ENCODE measurements at regions of chr2 and their contacts with region 1.

Region 1: DNA sequence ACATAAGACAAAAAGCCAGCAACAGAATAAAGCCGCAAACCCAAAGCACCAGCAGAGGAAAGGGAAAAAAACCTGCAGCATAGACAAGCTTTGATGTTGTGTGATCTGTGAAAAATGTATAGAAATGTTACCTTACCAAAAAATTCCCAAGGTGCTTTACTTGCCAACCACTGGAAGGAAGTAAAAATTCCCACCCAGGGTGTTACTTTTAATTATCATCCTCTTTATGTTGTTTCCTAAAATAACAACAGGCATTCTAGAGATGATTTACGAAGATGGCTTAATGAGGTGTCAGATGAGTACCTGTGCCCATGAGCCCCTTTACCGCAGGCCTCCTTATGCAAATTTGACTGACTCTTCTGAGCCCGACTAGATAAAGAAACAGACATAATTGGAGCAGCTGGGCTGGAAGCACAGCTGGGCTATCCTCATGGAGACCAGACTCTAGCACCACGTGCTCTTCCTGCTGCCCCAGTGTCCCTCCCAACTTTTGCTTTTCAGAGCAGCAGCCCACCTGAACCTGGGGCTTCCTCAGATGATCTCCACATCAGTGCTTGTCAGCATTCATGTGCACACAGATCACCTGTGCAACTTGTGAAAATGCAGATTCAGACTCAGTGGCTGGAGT is 41.5 kb downstream of the SRSF7 start:
- DNase-seq: peak in 5 of 14 experiments; percentile 53 to 88 (median 78)
- ATAC-seq: peak; percentile 77
- H3K4me3 ChIP-seq: peak overlapping the region; percentile 2
- H3K4me3 Mint-ChIP-seq: peak overlapping the region; percentile 82
- H3K27ac ChIP-seq: peak overlapping the region; percentile 50 to 55
- H3K27ac Mint-ChIP-seq: peak overlapping the region; percentile 93
- H3K4me1 ChIP-seq: peaks cover 67% of the 10 kb centered on the region
- H3K4me1 Mint-ChIP-seq: peaks cover 72% of the 10 kb centered on the region
- H3K27me3 ChIP-seq: no peaks in the 10 kb centered on the region
- H3K27me3 Mint-ChIP-seq: no peaks in the 10 kb centered on the region
- CTCF ChIP-seq: no peak

Region 2: GRCh38 chr2:38515160-38516074 is 194.3 kb before region 1 on chr2:
- CTCF ChIA-PET with region 1: no interaction called
- POLR2A ChIA-PET with region 1: no interaction called
- intact Hi-C with region 1: no loop called
- DNase-seq: no peak
- ATAC-seq: no peak
- H3K4me3 ChIP-seq: no peak overlapping the region
- H3K4me3 Mint-ChIP-seq: no peak overlapping the region
- H3K27ac ChIP-seq: no peak overlapping the region
- H3K27ac Mint-ChIP-seq: no peak overlapping the region
- H3K4me1 ChIP-seq: no peaks in the 10 kb centered on the region
- H3K4me1 Mint-ChIP-seq: no peaks in the 10 kb centered on the region
- H3K27me3 ChIP-seq: no peaks in the 10 kb centered on the region
- H3K27me3 Mint-ChIP-seq: no peaks in the 10 kb centered on the region
- CTCF ChIP-seq: no peak

Region 3: GRCh38 chr2:38682008-38682575 is 27.6 kb before region 1 on chr2:
- CTCF ChIA-PET with region 1: interaction called, 5 read pairs
- POLR2A ChIA-PET with region 1: interaction called, 13 read pairs
- intact Hi-C with region 1: loop called in 1 of 2 experiments (anchors 2 kb)
- DNase-seq: peak in 4 of 14 experiments; percentile 28 to 82 (median 76)
- ATAC-seq: peak; percentile 88
- H3K4me3 ChIP-seq: peak overlapping the region; percentile 31
- H3K4me3 Mint-ChIP-seq: peak overlapping the region; percentile 49
- H3K27ac ChIP-seq: peak overlapping the region; percentile 71 to 78
- H3K27ac Mint-ChIP-seq: peak overlapping the region; percentile 86
- H3K4me1 ChIP-seq: peaks cover 55% of the 10 kb centered on the region
- H3K4me1 Mint-ChIP-seq: peaks cover 50% of the 10 kb centered on the region
- H3K27me3 ChIP-seq: no peaks in the 10 kb centered on the region
- H3K27me3 Mint-ChIP-seq: no peaks in the 10 kb centered on the region
- CTCF ChIP-seq: peak; percentile 23

Region 4: GRCh38 chr2:38697125-38697840 is 12.4 kb before region 1 on chr2:
- CTCF ChIA-PET with region 1: no interaction called
- POLR2A ChIA-PET with region 1: interaction called, 20 read pairs
- intact Hi-C with region 1: no loop called
- DNase-seq: peak in 12 of 14 experiments; percentile 12 to 86 (median 50)
- ATAC-seq: peak; percentile 65
- H3K4me3 ChIP-seq: no peak overlapping the region
- H3K4me3 Mint-ChIP-seq: peak overlapping the region; percentile 54
- H3K27ac ChIP-seq: peak overlapping the region; percentile 47 to 63
- H3K27ac Mint-ChIP-seq: peak overlapping the region; percentile 90
- H3K4me1 ChIP-seq: peaks cover 79% of the 10 kb centered on the region
- H3K4me1 Mint-ChIP-seq: peaks cover 70% of the 10 kb centered on the region
- H3K27me3 ChIP-seq: no peaks in the 10 kb centered on the region
- H3K27me3 Mint-ChIP-seq: no peaks in the 10 kb centered on the region
- CTCF ChIP-seq: no peak

Region 5: DNA sequence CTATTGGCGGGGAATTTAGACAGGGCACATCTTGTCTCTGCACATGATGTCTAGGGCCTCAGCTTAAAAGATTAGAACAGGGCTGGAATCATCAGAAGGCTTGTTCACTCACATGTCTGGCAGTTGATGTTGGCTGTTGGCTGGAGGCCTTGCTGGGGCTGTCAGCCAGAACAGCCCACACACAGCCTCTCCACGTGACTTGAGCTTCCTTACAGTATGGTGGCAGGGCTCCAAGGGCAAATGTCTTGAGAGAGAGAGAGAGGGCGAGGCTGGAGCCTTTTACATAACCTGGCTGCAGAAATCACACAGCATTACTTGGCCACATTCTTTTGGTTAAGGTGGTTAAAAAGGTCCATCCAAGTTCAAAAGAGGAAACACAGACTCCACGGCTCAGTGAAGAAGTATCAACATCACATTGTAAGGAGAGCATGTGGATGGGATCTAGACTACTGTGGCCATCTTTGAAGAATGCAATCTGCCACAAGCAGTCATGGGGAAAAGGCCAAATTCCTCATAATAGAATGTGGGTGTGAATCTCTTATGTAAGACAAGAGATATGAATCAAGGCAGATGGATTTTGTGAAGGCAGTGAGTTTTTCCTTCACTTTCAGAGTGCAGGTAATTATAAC is 11.0 kb after region 1 on chr2:
- CTCF ChIA-PET with region 1: interaction called, 9 read pairs
- POLR2A ChIA-PET with region 1: interaction called, 11 read pairs
- intact Hi-C with region 1: no loop called
- DNase-seq: no peak
- ATAC-seq: no peak
- H3K4me3 ChIP-seq: no peak overlapping the region
- H3K4me3 Mint-ChIP-seq: no peak overlapping the region
- H3K27ac ChIP-seq: peak overlapping the region in 1 of 2 donors; percentile 7
- H3K27ac Mint-ChIP-seq: peak overlapping the region; percentile 25
- H3K4me1 ChIP-seq: peaks cover 37% of the 10 kb centered on the region
- H3K4me1 Mint-ChIP-seq: peaks cover 53% of the 10 kb centered on the region
- H3K27me3 ChIP-seq: no peaks in the 10 kb centered on the region
- H3K27me3 Mint-ChIP-seq: no peaks in the 10 kb centered on the region
- CTCF ChIP-seq: no peak

Measured in CD4-positive, alpha-beta T cell (primary cell).